Dorsolateral prefrontal cortex (tissue), 120 donors: ENCODE measurements at regions of chr14 and their contacts with region 1.

Region 1: GRCh38 chr14:52950898-52951689 is at the start of gene FERMT2:
- DNase-seq: peak; percentile 80 to 90 (median 84)
- H3K4me3 ChIP-seq: peak within 1 kb of the TSS; percentile 57 to 99 (median 90)
- H3K27ac ChIP-seq: peak within 1 kb of the TSS; percentile 92 to 99 (median 97)
- H3K27me3 ChIP-seq: no peaks in the 10 kb centered on the region
- CTCF ChIP-seq: peak in 2 of 56 donors; percentile 6 to 7
- total RNA-seq, gene FERMT2: 42.2 to 137 (median 70.3) TPM

Region 2: DNA sequence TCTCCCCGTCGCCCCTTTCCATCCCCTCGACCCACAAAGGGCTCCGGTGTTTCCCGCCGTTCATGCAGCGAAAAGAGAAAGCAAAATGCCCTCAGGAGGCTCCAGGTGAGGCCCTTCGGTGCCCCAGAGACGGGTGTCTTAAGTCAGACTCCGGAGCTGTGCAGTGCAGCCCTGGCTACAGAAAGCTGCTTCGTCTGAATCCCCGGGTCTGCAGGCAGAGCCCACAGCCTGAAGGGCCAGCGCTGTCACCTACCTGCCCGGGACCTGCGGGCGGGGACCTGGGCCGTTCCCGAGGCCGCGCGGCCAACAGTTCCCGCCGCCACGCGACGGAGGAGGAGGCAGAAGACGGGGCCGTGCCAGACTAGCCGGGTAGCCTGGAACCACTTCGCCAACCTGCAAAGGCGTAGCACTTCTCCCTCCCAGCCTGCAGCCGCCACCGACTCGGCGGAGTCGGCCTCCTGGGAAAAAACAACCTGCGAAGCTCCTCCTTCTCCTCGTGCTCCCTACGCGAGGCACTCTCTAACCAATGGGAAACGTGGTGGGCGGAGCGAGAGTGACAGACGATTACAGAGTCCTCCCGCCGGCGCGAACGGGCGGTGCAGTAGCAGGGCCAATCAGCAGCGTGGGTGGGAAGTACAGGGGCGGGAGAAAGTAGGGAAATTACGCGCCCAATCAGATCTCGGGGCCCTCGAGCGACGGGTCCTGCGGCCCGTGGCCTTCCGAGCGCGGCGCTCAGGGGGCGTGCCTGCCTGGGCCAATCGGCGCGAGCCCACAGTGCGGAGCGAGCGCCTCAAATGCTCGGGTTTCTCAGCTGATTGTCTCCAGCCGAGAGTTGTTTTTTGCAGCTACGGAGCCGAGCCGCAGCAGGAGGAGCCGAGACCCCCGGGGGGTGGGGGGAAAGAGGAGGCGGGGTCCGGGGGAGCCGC is 398.8 kb before region 1 on chr14 and contains the starts of genes GPR137C and TXNDC16:
- intact Hi-C with region 1: loop called in 1 of 2 experiments (anchors 10 kb)
- DNase-seq: peak; percentile 100
- H3K4me3 ChIP-seq: peak within 1 kb of the TSS; percentile 75 to 100 (median 95)
- H3K27ac ChIP-seq: peak within 1 kb of the TSS; percentile 16 to 95 (median 88)
- H3K27me3 ChIP-seq: no peaks in the 10 kb centered on the region
- CTCF ChIP-seq: peak in 12 of 56 donors; percentile 2 to 48 (median 20)
- total RNA-seq, gene GPR137C: 9.7 to 41.2 (median 21.6) TPM
- total RNA-seq, gene TXNDC16: 16.1 to 34.2 (median 24.0) TPM

Region 3: GRCh38 chr14:52824507-52824906 is 126.6 kb before region 1 on chr14:
- intact Hi-C with region 1: loop called in 1 of 2 experiments (anchors 5 kb)
- DNase-seq: no peak
- H3K4me3 ChIP-seq: peak overlapping the region in 3 of 59 donors; percentile 7 to 19 (median 18)
- H3K27ac ChIP-seq: no peak overlapping the region
- H3K27me3 ChIP-seq: no peaks in the 10 kb centered on the region
- CTCF ChIP-seq: no peak

Region 4: GRCh38 chr14:53055003-53055402 is 103.9 kb after region 1 on chr14:
- intact Hi-C with region 1: loop called (anchors 5 kb)
- DNase-seq: no peak
- H3K4me3 ChIP-seq: no peak overlapping the region
- H3K27ac ChIP-seq: peak overlapping the region in 29 of 59 donors; percentile 5 to 73 (median 44)
- H3K27me3 ChIP-seq: no peaks in the 10 kb centered on the region
- CTCF ChIP-seq: peak; percentile 65 to 94 (median 83)

Region 5: GRCh38 chr14:53152890-53153701 is 202.0 kb after region 1 on chr14 and contains the start of gene DDHD1:
- intact Hi-C with region 1: loop called in 1 of 2 experiments (anchors 5 kb)
- DNase-seq: peak; percentile 58 to 88 (median 68)
- H3K4me3 ChIP-seq: peak within 1 kb of the TSS; percentile 65 to 98 (median 90)
- H3K27ac ChIP-seq: peak within 1 kb of the TSS; percentile 42 to 96 (median 89)
- H3K27me3 ChIP-seq: no peaks in the 10 kb centered on the region
- CTCF ChIP-seq: peak in 15 of 56 donors; percentile 7 to 46 (median 20)
- total RNA-seq, gene DDHD1: 26.9 to 70.6 (median 49.7) TPM

Region 6: GRCh38 chr14:53209370-53209769 is 258.3 kb after region 1 on chr14:
- intact Hi-C with region 1: loop called in 1 of 2 experiments (anchors 10 kb)
- DNase-seq: no peak
- H3K4me3 ChIP-seq: no peak overlapping the region
- H3K27ac ChIP-seq: peak overlapping the region in 15 of 59 donors; percentile 2 to 61 (median 24)
- H3K27me3 ChIP-seq: no peaks in the 10 kb centered on the region
- CTCF ChIP-seq: peak in 1 of 56 donors; percentile 5

Region 7: GRCh38 chr14:53306267-53306721 is 355.2 kb after region 1 on chr14:
- intact Hi-C with region 1: loop called (anchors 5 kb)
- DNase-seq: peak; percentile 51 to 75 (median 70)
- H3K4me3 ChIP-seq: peak overlapping the region; percentile 11 to 71 (median 54)
- H3K27ac ChIP-seq: peak overlapping the region; percentile 78 to 100 (median 96)
- H3K27me3 ChIP-seq: no peaks in the 10 kb centered on the region
- CTCF ChIP-seq: peak; percentile 43 to 94 (median 88)